ENCODE measurements at regions of chr9 and their contacts with region 1.

Region 1: DNA sequence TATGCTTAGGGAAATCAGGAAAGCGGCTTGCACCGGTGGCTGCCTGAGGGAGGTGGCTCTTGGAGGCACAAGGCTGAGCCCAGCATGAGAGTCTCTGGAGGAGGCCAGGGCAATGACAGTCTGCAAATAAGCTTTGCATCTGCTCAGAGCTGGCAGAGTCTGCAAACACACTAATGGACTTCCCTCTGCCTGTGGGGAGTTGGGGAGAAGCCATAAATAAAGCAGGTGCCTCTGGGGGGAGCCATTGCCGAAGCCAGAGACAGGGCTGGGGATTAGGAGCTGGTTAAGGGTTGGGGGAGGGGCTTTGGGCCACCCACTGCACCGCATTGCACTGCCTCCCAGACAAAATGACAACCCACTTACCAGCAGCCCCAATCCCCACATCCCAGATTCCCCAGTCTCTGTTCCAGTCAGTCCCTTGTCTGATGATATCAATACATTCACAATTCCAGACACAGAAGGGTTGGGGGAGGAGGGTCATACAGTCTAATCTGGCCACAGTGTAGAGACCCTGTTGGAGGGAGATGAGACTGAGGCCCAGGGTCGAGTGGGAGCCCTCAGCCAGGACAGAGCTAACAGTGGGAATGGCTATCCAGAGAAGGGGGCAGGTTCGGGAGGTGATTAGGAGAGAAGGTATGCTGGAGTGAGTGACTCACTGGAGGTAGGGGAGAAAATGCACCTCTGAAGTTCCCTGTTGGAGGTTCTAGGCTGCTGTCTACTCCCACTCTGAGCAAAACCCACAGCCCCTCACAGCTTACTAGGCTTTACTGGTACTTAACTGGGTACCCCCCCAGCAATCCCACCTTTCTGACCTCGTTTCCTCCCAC is 53.7 kb downstream of the PAX5 start:
- DNase-seq: no peak

Region 2: DNA sequence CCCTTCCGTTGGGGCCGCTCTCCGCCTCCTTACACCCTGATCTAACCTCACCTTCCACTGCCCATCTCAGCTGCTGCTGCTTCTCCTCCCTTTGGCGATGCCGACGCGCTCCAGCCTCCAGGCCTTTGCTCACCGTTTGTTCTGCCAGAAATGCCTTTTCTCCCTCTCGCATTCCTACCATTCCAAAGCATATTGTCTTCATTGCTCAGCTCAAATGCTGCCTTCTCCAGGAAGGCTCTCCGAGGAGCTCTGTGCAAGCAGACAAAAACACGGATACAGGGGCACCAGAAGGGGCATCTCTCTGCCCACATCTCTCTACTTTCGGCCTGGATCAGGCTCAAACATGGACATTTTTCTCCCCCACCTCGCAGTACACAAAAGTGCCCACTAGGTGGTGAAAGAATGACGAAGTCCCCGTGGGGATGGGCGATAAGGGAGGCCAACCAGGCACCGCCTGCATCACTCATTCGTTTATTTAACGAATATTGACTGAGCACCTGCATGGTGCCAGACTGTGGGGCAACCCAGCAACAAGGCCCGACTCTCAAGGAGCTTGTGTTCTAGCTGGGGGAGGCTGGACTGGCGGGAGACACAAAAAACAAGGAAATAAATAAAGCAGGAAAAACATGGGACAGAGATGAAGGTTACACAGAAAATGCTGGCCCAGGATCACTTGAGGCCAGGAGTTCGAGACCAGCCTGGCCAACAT is 434.8 kb after region 1 on chr9:
- in situ Hi-C with region 1: loop called (anchors 10 kb)
- DNase-seq: peak; percentile 70

Measured in Caki2 (cell line).